AG04450 (cell line): ENCODE measurements at regions of chr2 and their contacts with region 1.

Region 1: GRCh38 chr2:113390124-113390849 is 47.2 kb upstream of the ZNG1B start:
- DNase-seq: peak; percentile 68
- H3K4me3 ChIP-seq: peak overlapping the region; percentile 12; the same call in 1 of the 2 replicates
- H3K27ac ChIP-seq: no peak overlapping the region
- H3K27me3 ChIP-seq: peaks cover 6% of the 10 kb centered on the region
- CTCF ChIP-seq: peak; percentile 95

Region 2: DNA sequence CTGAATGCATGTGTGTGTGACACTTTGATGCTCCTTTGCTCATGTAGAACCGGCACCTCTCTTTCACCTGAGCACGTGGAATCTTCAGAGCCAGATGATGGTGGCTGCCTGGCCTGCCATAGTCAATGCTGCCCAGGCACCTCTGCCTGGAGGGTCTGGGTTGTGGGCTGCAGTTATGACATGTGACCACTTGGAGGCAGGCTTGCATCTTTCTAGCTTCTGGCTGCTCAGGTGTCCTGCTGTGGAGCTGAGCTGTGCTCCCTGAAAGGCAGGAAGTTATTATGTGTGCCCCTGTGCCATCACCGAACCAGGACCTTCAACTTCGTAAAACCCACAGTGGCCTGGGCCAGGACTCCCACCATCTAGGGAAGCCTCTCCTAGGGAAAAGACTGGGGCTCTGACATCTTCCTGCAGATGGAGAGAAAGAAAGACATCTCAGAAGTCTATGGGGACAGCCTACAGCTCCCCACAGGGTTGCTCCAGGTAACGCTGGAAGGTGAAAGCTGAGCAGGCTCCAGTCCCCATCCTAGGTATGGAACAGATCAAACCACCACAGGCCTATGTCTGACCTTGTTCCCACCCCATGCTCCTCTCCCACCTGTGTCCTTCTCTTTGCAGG is 186.3 kb before region 1 on chr2:
- CTCF ChIA-PET with region 1: interaction called, 113 read pairs
- POLR2A ChIA-PET with region 1: no interaction called
- DNase-seq: no peak
- H3K4me3 ChIP-seq: no peak overlapping the region
- H3K27ac ChIP-seq: no peak overlapping the region
- H3K27me3 ChIP-seq: no peaks in the 10 kb centered on the region
- CTCF ChIP-seq: peak; percentile 85

Region 3: DNA sequence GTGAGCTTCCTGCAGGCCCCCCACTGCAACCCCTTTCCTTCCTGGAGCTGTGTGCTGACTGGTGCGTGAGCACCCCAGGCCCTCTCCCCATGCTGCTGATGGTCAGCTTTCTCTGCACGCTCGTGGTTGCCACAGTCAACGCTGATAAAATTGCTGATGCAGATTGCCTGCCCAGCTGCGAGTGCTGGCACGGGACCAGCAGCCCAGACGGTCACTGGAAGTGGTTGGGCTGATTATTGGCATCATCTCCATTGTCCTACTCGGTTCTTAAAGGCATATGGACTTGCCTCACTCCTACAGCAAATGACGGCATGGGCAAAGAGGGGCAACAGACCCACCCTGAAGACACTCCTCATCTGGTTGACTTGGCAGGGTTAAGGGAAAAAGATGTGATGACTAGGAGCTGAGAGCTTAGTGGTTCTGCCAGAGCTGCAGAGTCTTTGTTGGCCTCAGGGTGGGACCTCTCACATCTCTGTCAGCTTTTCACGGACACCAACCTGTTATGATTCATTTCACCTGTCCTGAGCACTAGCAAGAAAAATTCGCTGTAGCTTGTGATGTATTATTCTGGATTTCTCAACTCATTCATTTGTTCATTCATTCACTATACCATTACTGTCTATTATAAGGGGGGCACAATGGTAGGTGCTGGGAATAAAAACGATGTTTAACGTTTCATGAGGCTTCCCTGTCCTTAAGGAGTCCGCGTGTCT is 150.0 kb before region 1 on chr2:
- CTCF ChIA-PET with region 1: interaction called, 80 read pairs
- POLR2A ChIA-PET with region 1: no interaction called
- DNase-seq: peak; percentile 83
- H3K4me3 ChIP-seq: peak overlapping the region; percentile 10
- H3K27ac ChIP-seq: peak overlapping the region; percentile 95
- H3K27me3 ChIP-seq: no peaks in the 10 kb centered on the region
- CTCF ChIP-seq: 0 out of 2 replicates have a peak, but pooled peaks have one; percentile 10

Region 4: DNA sequence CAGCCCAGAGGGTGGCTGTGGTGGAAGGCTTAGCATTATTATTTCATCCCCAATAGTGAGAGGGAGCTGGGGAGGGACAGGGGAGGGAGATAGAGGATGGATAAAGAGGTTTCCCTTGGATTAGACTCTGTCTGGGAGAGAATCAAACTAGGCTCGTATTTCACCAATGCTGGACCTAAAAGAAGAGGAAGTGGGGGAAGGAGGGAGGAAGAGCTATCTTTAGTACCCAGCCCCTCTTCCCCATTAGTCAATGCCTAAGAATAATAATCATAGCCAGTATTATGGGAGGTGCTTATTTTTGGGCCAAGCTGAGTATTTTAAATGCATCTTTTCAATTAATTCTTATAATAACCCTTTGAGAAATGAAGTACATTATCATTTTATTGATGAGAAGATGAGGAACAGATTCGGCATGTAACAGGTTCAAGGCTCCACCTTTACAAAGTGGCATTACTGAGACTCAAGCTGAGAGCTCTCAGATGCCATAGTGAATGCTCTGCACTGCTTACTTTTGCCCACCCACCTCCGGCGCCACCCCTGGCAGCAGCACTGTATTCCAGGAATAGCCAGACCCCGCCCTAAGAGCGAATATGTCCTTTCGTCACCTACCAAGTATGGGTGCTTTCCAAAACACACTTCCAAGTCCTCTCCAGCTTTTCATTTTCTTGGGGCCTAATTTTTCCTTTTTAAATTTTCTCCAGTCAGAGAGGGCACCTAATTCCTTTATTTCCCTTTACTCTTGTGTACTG is 132.6 kb before region 1 on chr2:
- CTCF ChIA-PET with region 1: interaction called, 80 read pairs
- POLR2A ChIA-PET with region 1: no interaction called
- DNase-seq: no peak
- H3K4me3 ChIP-seq: no peak overlapping the region
- H3K27ac ChIP-seq: no peak overlapping the region
- H3K27me3 ChIP-seq: no peaks in the 10 kb centered on the region
- CTCF ChIP-seq: no peak

Region 5: GRCh38 chr2:113370478-113371091 is 19.7 kb before region 1 on chr2:
- CTCF ChIA-PET with region 1: interaction called, 24 read pairs
- POLR2A ChIA-PET with region 1: no interaction called
- DNase-seq: peak; percentile 43
- H3K4me3 ChIP-seq: no peak overlapping the region
- H3K27ac ChIP-seq: no peak overlapping the region
- H3K27me3 ChIP-seq: peaks cover 5% of the 10 kb centered on the region
- CTCF ChIP-seq: peak; percentile 75

Region 6: DNA sequence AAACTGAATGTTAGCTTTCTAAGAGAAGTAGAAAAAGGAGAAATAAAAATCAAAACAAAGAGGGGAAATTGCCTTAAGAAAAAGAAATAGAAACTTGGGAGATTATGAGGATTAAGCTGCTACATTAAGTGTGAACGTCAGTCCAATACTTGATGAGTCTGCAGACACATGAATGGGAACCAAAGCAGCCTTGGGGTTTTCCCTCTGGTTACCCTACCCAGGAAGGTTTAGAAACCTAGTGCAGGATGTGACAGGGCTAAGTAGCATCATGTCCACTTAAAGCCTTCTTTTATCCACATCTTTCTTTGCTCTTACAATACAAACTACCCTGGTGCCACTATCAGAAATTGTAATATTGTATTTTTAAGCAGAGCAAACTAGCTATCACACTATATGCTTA is 343.9 kb after region 1 on chr2:
- CTCF ChIA-PET with region 1: no interaction called
- POLR2A ChIA-PET with region 1: no interaction called
- DNase-seq: no peak
- H3K4me3 ChIP-seq: no peak overlapping the region
- H3K27ac ChIP-seq: no peak overlapping the region
- H3K27me3 ChIP-seq: no peaks in the 10 kb centered on the region
- CTCF ChIP-seq: no peak